WTC11 (cell line): ENCODE measurements at regions of chr22 and their contacts with region 1.

Region 1: GRCh38 chr22:38097557-38098409 is 12.7 kb downstream of the BAIAP2L2 start:
- DNase-seq: peak; percentile 83
- ATAC-seq: peak; percentile 93
- H3K4me3 Mint-ChIP-seq: peak overlapping the region; percentile 72
- H3K27ac Mint-ChIP-seq: no peak overlapping the region
- H3K4me1 Mint-ChIP-seq: peaks cover 14% of the 10 kb centered on the region
- H3K27me3 Mint-ChIP-seq: peaks cover 7% of the 10 kb centered on the region
- CTCF ChIP-seq: peak; percentile 75

Region 2: DNA sequence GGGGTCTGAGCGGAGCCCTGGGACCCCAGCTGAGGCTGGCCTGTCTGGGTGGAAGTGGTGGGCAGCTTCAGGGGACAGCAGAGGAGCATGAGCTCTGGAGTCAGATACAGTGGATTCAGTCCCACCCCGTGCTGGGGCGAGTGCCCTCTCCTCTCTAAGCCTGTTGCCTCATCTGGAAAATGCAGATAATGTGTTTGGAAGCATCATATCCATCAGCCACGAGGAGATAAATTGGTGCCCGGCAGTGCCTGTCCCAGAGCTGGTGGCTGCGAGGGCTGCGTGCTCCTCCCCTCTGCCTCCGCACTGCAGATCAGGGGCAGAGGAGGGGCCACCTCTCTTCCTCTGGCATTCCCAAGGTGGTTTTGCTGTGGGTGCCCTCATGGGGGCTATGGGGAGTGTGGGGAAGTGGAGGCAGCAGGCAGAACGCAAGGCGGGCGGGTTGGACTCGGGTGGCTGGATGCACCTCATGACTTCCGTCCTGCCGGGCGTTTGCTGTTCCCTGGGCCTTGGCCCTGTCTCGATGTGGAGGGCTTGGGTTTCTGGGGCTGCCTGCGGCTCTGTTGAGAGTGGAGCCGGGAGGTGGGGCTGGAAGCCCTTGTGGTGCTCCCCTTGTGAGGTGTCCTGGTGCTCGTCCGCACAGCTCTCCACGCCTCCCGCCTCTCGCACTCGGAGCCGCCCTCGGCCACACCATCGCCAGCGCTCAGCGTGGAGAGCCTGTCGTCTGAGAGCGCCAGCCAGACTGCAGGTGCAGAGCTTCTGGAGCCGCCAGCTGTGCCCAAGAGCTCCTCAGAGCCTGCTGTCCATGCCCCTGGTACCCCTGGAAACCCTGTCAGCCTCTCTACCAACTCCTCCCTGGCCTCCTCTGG is 170.8 kb before region 1 on chr22:
- CTCF ChIA-PET with region 1: no interaction called
- POLR2A ChIA-PET with region 1: no interaction called
- DNase-seq: no peak
- ATAC-seq: no peak
- H3K4me3 Mint-ChIP-seq: no peak overlapping the region
- H3K27ac Mint-ChIP-seq: no peak overlapping the region
- H3K4me1 Mint-ChIP-seq: no peaks in the 10 kb centered on the region
- H3K27me3 Mint-ChIP-seq: no peaks in the 10 kb centered on the region; the same call in 1 of the 2 replicates
- CTCF ChIP-seq: no peak

Region 3: DNA sequence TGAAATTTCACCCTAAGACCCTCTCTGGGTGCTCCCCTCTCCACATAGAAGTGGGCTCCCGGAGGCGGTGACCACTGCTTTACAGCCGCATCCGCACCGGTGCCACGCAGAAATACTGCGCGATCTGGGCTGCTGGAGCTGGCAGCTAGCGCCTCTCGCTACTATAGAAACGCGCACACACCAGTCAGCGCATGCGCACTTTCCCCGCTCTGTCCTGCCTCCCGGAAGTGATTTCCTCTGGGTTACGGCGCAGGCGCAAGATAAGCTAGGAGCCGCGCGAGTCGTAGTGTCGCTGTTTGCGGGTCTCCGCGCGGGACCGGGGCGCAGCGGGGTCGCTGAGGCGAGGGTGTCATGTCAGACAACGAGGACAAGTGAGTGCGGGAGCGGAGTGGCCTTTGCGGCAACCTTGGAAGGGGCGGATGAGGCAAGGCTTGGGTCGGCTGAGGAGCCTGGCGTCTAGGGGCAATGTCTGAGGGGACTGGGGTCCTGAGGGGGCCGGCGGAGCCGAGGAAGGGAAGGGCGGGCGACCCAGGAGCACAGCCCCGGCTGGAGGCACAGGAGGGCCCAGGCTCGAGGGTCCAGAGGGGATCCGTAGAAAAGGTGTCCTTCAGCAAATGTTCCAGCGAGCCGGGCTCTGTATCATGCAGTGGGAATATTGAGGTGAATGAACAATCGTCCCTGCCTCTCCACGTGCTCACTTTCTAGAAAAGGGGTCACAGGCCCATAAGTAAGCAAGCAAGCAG is 144.2 kb before region 1 on chr22 and contains the starts of genes C22orf23 and POLR2F:
- CTCF ChIA-PET with region 1: no interaction called
- POLR2A ChIA-PET with region 1: no interaction called
- DNase-seq: peak; percentile 96
- ATAC-seq: peak; percentile 86
- H3K4me3 Mint-ChIP-seq: peak within 1 kb of the TSS; percentile 95
- H3K27ac Mint-ChIP-seq: peak within 1 kb of the TSS; percentile 95
- H3K4me1 Mint-ChIP-seq: peaks cover 24% of the 10 kb centered on the region
- H3K27me3 Mint-ChIP-seq: peaks cover 16% of the 10 kb centered on the region
- CTCF ChIP-seq: no peak
- total RNA-seq, gene C22orf23: 0.16 to 0.96 TPM (median 0.72 TPM) in 3 replicates
- total RNA-seq, gene POLR2F: 128 to 138 TPM (median 132 TPM) in 3 replicates

Region 4: GRCh38 chr22:38034274-38034882 is 63.4 kb before region 1 on chr22:
- CTCF ChIA-PET with region 1: interaction called, 12 read pairs
- POLR2A ChIA-PET with region 1: interaction called, 5 read pairs
- DNase-seq: peak; percentile 71
- ATAC-seq: peak; percentile 79
- H3K4me3 Mint-ChIP-seq: no peak overlapping the region
- H3K27ac Mint-ChIP-seq: peak overlapping the region; percentile 34
- H3K4me1 Mint-ChIP-seq: peaks cover 31% of the 10 kb centered on the region
- H3K27me3 Mint-ChIP-seq: no peaks in the 10 kb centered on the region; the same call in 1 of the 2 replicates
- CTCF ChIP-seq: no peak

Region 5: GRCh38 chr22:38069372-38070249 is 28.2 kb before region 1 on chr22:
- CTCF ChIA-PET with region 1: interaction called, 44 read pairs
- POLR2A ChIA-PET with region 1: interaction called, 5 read pairs
- DNase-seq: peak; percentile 58
- ATAC-seq: peak; percentile 66
- H3K4me3 Mint-ChIP-seq: no peak overlapping the region
- H3K27ac Mint-ChIP-seq: peak overlapping the region; percentile 45; the same call in 1 of the 2 replicates
- H3K4me1 Mint-ChIP-seq: peaks cover 2% of the 10 kb centered on the region; the same call in 1 of the 2 replicates
- H3K27me3 Mint-ChIP-seq: no peaks in the 10 kb centered on the region
- CTCF ChIP-seq: peak; percentile 25; the same call in 1 of the 2 replicates

Region 6: DNA sequence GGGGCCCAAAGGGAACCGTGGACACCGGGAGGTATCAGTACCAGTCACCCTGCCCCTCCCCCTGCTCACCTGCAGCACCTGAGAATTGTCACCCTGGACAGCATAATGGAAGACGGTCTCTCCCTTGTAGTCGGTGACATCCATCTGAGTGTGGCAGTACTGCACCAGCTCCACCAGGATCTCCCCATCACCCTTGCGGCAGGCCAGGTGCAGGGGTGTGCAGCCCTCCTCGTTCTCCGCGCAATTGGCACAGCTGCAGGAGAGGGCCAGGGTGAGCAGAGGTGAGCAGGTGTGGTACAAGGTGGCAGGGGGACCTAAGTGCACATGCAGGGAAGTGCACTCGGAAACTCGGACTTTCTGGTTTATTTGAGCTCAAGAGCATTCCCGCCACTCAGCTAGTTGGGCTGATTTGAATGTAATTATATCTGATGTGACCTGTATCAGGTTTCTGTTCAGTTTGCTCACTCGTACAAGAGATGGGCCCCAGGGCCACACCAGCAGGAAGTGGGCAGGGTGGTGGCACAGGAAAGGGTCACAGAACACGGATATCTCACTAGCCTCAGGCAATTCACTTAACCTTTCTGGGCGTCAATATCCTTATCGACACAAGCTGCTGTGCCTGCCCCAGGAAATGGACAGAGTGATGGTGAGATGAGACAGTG is 45.4 kb after region 1 on chr22:
- CTCF ChIA-PET with region 1: interaction called, 32 read pairs
- POLR2A ChIA-PET with region 1: no interaction called
- DNase-seq: no peak
- ATAC-seq: no peak
- H3K4me3 Mint-ChIP-seq: no peak overlapping the region
- H3K27ac Mint-ChIP-seq: peak overlapping the region; percentile 43
- H3K4me1 Mint-ChIP-seq: peaks cover 9% of the 10 kb centered on the region
- H3K27me3 Mint-ChIP-seq: no peaks in the 10 kb centered on the region
- CTCF ChIP-seq: no peak

Region 7: DNA sequence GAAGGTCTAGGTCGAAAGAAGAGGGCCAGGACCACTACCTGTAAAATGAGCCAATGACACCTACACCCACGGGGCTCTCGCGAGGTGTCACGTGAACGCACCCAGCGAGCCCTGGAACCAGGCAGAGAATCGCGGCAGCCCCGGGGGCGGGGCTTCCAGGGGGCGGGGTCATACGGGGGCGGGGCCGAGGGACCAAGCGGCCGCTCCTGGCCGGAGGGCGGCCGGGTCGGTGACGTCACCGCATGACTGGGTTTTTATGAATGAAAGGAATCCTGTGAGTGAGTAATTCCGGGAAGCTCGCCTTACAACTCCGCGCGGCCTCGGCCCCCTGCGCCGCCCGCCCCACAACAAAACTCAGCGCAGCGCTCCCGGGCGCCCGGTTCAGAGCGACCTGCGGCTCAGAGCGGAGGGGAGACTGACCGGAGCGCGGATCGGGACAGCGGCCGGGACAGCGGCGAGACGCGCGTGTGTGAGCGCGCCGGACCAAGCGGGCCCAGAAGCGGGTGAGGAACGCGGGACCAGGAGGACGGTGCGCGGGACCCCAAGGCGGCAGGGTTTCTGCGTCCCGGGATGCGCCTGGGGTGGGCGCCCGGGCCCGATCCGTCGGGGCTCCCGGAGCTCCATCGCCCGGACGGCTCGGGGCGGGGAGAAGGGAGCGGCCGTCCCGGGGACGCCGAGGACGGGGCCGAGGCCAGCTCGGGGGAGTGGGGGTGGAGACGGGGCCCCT is 104.1 kb after region 1 on chr22 and contains the start of gene MAFF:
- CTCF ChIA-PET with region 1: interaction called, 18 read pairs
- POLR2A ChIA-PET with region 1: no interaction called
- DNase-seq: peak; percentile 96
- ATAC-seq: peak; percentile 68
- H3K4me3 Mint-ChIP-seq: peak within 1 kb of the TSS; percentile 83
- H3K27ac Mint-ChIP-seq: peak within 1 kb of the TSS; percentile 25
- H3K4me1 Mint-ChIP-seq: peaks cover 12% of the 10 kb centered on the region
- H3K27me3 Mint-ChIP-seq: peaks cover 54% of the 10 kb centered on the region
- CTCF ChIP-seq: no peak
- total RNA-seq, gene MAFF: 4.6 to 6.1 TPM (median 5.7 TPM) in 3 replicates

Region 8: DNA sequence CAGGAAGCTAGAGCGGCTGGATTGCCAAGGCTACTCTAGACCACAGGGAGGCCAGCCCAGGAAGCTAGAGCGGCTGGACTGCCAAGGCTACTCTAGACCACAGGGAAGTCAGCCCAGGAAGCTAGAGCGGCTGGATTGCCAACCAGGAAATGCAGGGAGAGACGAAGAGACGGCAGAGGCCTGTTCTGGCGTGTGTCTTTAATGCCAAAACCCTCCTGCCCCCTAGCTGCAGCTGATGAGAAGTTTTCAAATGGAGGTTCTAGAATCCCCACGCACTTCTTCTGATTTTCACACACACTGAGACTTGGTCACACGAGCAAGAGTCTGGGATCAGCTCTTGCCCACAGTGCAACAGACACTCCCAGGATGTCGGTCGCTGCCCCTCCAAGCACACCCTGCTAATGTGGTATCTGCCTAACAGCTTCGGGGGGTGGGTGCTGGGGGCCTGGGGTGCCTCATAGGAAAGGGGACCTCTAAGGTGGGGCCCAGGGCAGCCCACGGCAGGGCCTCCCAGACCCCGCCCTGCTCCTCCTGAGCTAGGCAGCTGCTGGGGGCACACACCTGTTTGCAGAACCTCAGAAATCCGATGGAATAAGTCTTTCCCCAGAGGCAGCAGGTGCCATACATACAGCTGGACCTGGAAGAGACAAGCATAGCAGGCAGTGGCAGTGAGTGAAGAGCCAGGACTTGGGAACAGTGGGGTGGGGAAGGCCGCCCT is 132.5 kb after region 1 on chr22:
- CTCF ChIA-PET with region 1: interaction called, 16 read pairs
- POLR2A ChIA-PET with region 1: no interaction called
- DNase-seq: peak; percentile 41
- ATAC-seq: peak; percentile 59
- H3K4me3 Mint-ChIP-seq: no peak overlapping the region
- H3K27ac Mint-ChIP-seq: 0 out of 2 replicates have a peak overlapping the region, but pooled peaks have one; percentile 36
- H3K4me1 Mint-ChIP-seq: no peaks in the 10 kb centered on the region
- H3K27me3 Mint-ChIP-seq: no peaks in the 10 kb centered on the region
- CTCF ChIP-seq: no peak

Region 9: DNA sequence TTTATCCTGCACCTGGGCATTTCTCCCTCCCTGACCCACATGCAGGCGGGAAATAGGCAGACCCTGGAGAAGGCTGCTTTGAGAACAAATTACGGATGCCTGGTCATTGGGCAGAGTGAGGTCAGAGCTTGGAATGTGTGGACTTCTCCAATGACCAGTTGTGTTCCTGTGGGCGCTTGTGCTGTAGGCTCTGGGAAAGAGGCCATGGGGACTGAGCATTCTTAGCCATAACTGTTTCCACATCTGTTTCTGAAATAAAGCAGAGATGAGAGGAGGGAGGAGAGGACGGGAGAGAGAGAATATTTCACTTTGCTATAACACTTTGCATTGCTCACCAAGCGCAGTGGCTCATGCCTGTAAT is 186.2 kb after region 1 on chr22:
- CTCF ChIA-PET with region 1: no interaction called
- POLR2A ChIA-PET with region 1: no interaction called
- DNase-seq: no peak
- ATAC-seq: no peak
- H3K4me3 Mint-ChIP-seq: no peak overlapping the region
- H3K27ac Mint-ChIP-seq: peak overlapping the region; percentile 41
- H3K4me1 Mint-ChIP-seq: peaks cover 26% of the 10 kb centered on the region
- H3K27me3 Mint-ChIP-seq: no peaks in the 10 kb centered on the region; the same call in 1 of the 2 replicates
- CTCF ChIP-seq: no peak